ENCODE measurements at regions of chr17 and their contacts with region 1.

Region 1: DNA sequence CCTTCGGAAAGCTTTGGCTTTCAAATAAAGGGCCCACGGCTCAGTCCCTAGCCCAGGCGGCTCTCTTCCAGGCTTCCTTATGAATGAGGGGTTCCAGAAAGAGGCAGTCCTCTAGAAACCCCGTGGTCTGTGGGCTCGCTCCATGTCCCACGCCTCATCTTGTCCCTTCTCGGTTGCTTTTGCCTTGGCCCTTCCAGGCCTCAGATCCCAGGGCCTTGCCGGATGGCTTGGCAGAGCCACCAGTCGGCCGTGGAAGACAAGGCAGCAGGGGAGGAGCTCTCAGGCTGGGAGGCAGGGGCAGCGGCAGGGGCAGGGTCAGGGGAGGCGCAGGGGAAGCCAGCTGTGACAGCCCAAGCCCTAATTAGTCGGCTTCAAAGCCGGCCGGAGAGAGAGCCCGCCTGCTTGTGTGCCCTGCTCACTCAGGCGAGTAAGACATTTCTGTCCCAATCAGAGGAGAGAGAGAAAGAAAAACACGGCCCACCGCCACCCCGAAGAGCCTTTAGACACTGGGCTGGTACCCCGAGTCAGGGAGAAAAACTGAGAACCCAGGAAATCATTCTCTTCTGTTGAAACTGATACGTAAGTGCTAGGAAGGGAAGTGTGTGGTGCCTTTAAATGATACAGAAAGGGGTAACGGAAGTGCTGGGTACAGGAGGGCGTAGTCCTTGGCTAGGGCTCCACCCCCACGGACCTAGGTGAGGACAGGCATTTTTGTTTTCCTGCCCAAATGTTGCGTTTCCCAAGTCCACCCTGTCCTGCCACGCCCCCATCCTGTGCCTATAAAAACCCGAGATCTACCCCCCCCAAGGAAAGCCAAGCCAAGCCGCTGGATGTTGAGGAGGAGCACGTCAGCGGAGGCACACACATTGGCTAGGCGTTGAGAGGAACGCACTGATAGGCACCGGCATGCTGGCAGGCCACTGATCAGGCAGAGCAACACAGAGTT is 27.8 kb upstream of the MEIOC start:
- DNase-seq: peak; percentile 80
- ATAC-seq: peak; percentile 96
- H3K4me3 Mint-ChIP-seq: peak overlapping the region; percentile 67
- H3K27ac Mint-ChIP-seq: peak overlapping the region; percentile 96
- H3K4me1 Mint-ChIP-seq: peaks cover 24% of the 10 kb centered on the region
- H3K27me3 Mint-ChIP-seq: peaks cover 4% of the 10 kb centered on the region; the same call in 1 of the 2 replicates
- CTCF ChIP-seq: no peak

Region 2: DNA sequence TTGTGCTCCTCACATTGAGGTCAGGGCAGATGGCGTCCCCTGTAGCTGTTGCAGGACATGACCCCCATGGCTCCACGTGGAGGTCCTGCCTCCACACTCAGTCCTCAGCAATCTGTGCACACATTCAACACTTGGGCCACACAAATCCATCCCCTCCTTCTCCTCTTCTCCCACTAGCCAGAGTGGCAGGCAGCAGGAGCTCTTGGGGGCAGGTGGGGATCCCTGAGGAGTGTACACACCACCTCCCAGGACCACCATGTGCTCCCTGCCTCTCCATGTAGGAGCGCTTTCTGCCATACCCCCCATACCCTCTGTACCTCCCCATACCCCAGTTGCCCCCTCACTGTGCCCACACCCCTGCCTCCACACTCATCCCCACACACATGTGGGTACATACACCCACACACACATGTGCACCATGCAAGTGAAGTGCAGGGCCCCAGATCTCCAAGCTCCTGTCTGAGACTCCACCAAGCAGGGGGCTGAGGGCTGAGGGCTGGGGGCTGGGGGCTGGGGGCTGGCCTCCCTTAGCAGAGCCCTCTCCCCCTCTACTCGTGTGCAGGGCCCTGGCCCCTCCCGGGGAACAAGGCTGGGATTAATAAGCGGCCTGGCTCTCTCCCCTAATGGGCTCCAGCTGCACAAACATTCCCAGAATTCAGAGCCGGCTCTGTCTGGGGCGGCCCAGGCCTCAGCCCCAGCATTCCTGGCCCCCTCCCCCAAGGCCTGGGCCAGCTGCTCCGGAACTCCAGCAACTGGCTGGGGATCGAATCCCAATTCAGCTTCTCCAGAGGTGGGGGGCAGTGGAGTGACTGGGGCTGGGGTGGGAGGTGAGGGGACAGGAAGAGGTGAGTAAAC is 20.5 kb before region 1 on chr17:
- CTCF ChIA-PET with region 1: interaction called, 11 read pairs
- POLR2A ChIA-PET with region 1: no interaction called
- DNase-seq: peak; percentile 71
- ATAC-seq: peak; percentile 87
- H3K4me3 Mint-ChIP-seq: no peak overlapping the region
- H3K27ac Mint-ChIP-seq: no peak overlapping the region
- H3K4me1 Mint-ChIP-seq: peaks cover 35% of the 10 kb centered on the region
- H3K27me3 Mint-ChIP-seq: no peaks in the 10 kb centered on the region; the same call in 1 of the 2 replicates
- CTCF ChIP-seq: no peak

Measured in WTC11 (cell line).